ENCODE measurements at regions of chr5 and their contacts with region 1.

Region 1: GRCh38 chr5:7850395-7851239 is at the start of gene CFAP90:
- DNase-seq: peak; percentile 49
- ATAC-seq: peak; percentile 92
- H3K4me3 ChIP-seq: peak within 1 kb of the TSS; percentile 54 to 71 (median 70)
- H3K27ac ChIP-seq: peak within 1 kb of the TSS; percentile 46
- H3K4me1 ChIP-seq: peaks cover 25% of the 10 kb centered on the region
- H3K27me3 ChIP-seq: peaks cover 3 to 17% of the 10 kb centered on the region in 2 experiments; a peak in 2 of 5 replicates
- CTCF ChIP-seq: peak; percentile 48
- EP300 ChIP-seq: no peak
- POLR2A ChIP-seq: no peak
- RAD21 ChIP-seq: 0 out of 2 replicates have a peak, but pooled peaks have one; percentile 10
- total RNA-seq, gene CFAP90: 0.11 and 0.20 TPM in 2 replicates

Region 2: GRCh38 chr5:7868773-7869473 is 18.3 kb after region 1 on chr5 and contains the starts of genes FASTKD3 and MTRR:
- CTCF ChIA-PET with region 1: no interaction called
- POLR2A ChIA-PET with region 1: interaction called, 18 read pairs
- in situ Hi-C with region 1: no loop called
- intact Hi-C with region 1: no loop called
- DNase-seq: peak; percentile 84
- ATAC-seq: peak; percentile 100
- H3K4me3 ChIP-seq: peak within 1 kb of the TSS; percentile 84 to 89 (median 87)
- H3K27ac ChIP-seq: peak within 1 kb of the TSS; percentile 74
- H3K4me1 ChIP-seq: peaks cover 59% of the 10 kb centered on the region
- H3K27me3 ChIP-seq: no peaks in the 10 kb centered on the region; a peak in 1 of 5 replicates
- CTCF ChIP-seq: no peak; the same call in 1 of the 2 replicates
- EP300 ChIP-seq: no peak
- POLR2A ChIP-seq: peak; percentile 85 to 92
- RAD21 ChIP-seq: peak; percentile 46; the same call in 1 of the 2 replicates
- total RNA-seq, gene FASTKD3: 17.8 and 24.8 TPM in 2 replicates
- total RNA-seq, gene MTRR: 39.2 and 43.1 TPM in 2 replicates

Region 3: DNA sequence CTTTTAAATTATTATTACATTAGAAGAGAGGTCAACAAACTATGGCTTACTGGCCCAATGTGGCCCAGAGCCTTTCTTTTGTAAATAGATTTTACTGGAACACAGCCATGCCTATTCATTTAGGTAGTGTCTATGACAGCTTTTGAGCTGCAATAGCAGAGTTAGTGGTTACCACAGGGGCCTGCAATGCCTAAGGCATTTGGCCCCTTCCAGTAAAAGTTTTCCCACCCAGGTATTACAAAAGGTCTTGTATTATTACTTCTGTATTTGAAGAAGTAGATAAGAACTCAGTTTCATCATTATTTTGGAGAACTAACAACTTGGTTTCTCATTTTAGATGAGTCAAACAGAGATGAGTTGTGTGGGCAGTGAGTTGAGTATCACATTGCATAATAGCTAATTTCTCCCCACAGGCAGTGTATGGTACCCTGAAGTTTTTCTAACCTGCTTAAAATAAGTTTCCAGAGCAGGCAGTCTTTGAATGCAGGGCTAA is 27.8 kb after region 1 on chr5:
- CTCF ChIA-PET with region 1: no interaction called
- POLR2A ChIA-PET with region 1: no interaction called
- in situ Hi-C with region 1: no loop called
- intact Hi-C with region 1: loop called (anchors 1 kb)
- DNase-seq: peak; percentile 41
- ATAC-seq: peak; percentile 49
- H3K4me3 ChIP-seq: no peak overlapping the region; a peak in 1 of 6 replicates
- H3K27ac ChIP-seq: peak overlapping the region; percentile 22
- H3K4me1 ChIP-seq: peaks cover 52% of the 10 kb centered on the region
- H3K27me3 ChIP-seq: no peaks in the 10 kb centered on the region
- CTCF ChIP-seq: no peak
- EP300 ChIP-seq: no peak
- POLR2A ChIP-seq: no peak
- RAD21 ChIP-seq: no peak

Region 4: GRCh38 chr5:7888901-7889300 is 38.3 kb after region 1 on chr5:
- CTCF ChIA-PET with region 1: no interaction called
- POLR2A ChIA-PET with region 1: no interaction called
- in situ Hi-C with region 1: no loop called
- intact Hi-C with region 1: no loop called
- DNase-seq: no peak
- ATAC-seq: no peak
- H3K4me3 ChIP-seq: no peak overlapping the region
- H3K27ac ChIP-seq: no peak overlapping the region
- H3K4me1 ChIP-seq: no peaks in the 10 kb centered on the region
- H3K27me3 ChIP-seq: no peaks in the 10 kb centered on the region
- CTCF ChIP-seq: no peak
- EP300 ChIP-seq: no peak
- POLR2A ChIP-seq: no peak
- RAD21 ChIP-seq: no peak

Measured in HepG2 (cell line).